B cell (primary cell): ENCODE measurements at regions of chr2 and their contacts with region 1.

Region 1: GRCh38 chr2:144332356-144333142 is 187.4 kb downstream of the ZEB2 start:
- DNase-seq: peak; percentile 94
- ATAC-seq: peak; percentile 88
- H3K4me3 ChIP-seq: peak overlapping the region; percentile 43 to 86 (median 84)
- H3K4me3 Mint-ChIP-seq: peak overlapping the region; percentile 92
- H3K27ac ChIP-seq: peak overlapping the region in 1 of 2 donors; percentile 40
- H3K27ac Mint-ChIP-seq: peak overlapping the region; percentile 92
- H3K4me1 ChIP-seq: peaks cover 6 to 11% of the 10 kb centered on the region in 2 donors
- H3K4me1 Mint-ChIP-seq: peaks cover 21% of the 10 kb centered on the region
- H3K27me3 ChIP-seq: no peaks in the 10 kb centered on the region
- H3K27me3 Mint-ChIP-seq: no peaks in the 10 kb centered on the region
- CTCF ChIP-seq: no peak

Region 2: DNA sequence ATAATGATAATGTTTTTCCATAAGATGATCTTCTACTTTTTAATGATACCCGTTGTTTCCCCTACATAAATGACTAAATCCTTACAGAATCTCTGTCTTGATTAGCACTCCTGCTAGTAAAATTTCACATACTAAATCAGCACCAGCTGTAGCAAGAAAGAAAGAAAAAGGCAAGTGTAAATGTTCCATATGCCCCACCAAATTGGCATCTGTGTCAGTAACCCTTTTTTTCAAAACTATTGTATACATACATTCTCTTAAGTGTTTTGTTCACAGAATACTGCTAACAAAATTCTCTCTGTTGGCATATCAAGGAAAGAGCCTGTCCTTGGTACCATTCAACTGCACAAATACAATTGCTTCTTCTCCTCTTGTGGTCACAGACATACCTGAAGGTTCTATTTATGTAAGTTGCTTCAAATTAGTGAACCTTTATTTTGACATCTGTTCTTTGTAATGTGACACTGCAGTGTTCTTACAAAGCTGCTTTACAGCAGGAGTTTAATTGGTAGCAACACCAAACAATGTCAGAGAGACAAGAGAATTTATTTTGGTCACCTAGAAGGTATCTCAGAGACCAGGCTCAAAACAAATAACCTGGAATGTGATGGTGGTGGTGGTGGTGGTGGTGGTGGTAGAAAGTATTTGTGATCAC is 454.5 kb before region 1 on chr2:
- CTCF ChIA-PET with region 1: no interaction called
- POLR2A ChIA-PET with region 1: no interaction called
- intact Hi-C with region 1: no loop called
- DNase-seq: no peak
- ATAC-seq: no peak
- H3K4me3 ChIP-seq: no peak overlapping the region
- H3K4me3 Mint-ChIP-seq: no peak overlapping the region
- H3K27ac ChIP-seq: no peak overlapping the region
- H3K27ac Mint-ChIP-seq: no peak overlapping the region
- H3K4me1 ChIP-seq: no peaks in the 10 kb centered on the region
- H3K4me1 Mint-ChIP-seq: no peaks in the 10 kb centered on the region
- H3K27me3 ChIP-seq: no peaks in the 10 kb centered on the region
- H3K27me3 Mint-ChIP-seq: no peaks in the 10 kb centered on the region
- CTCF ChIP-seq: no peak

Region 3: GRCh38 chr2:144183727-144184126 is 148.8 kb before region 1 on chr2:
- CTCF ChIA-PET with region 1: no interaction called
- POLR2A ChIA-PET with region 1: no interaction called
- intact Hi-C with region 1: loop called (anchors 5 kb)
- DNase-seq: peak; percentile 84
- ATAC-seq: peak; percentile 98
- H3K4me3 ChIP-seq: peak overlapping the region in 4 of 5 experiments; percentile 6 to 32 (median 22)
- H3K4me3 Mint-ChIP-seq: peak overlapping the region; percentile 86
- H3K27ac ChIP-seq: no peak overlapping the region
- H3K27ac Mint-ChIP-seq: no peak overlapping the region
- H3K4me1 ChIP-seq: peaks cover 8 to 22% of the 10 kb centered on the region in 2 donors
- H3K4me1 Mint-ChIP-seq: peaks cover 27% of the 10 kb centered on the region
- H3K27me3 ChIP-seq: no peaks in the 10 kb centered on the region
- H3K27me3 Mint-ChIP-seq: no peaks in the 10 kb centered on the region
- CTCF ChIP-seq: no peak

Region 4: GRCh38 chr2:144240587-144241339 is 91.8 kb before region 1 on chr2:
- CTCF ChIA-PET with region 1: no interaction called
- POLR2A ChIA-PET with region 1: no interaction called
- intact Hi-C with region 1: loop called (anchors 2 kb)
- DNase-seq: peak; percentile 61
- ATAC-seq: peak; percentile 82
- H3K4me3 ChIP-seq: peak overlapping the region in 3 of 5 experiments; percentile 18 to 28 (median 25)
- H3K4me3 Mint-ChIP-seq: peak overlapping the region; percentile 77
- H3K27ac ChIP-seq: peak overlapping the region; percentile 67 to 83
- H3K27ac Mint-ChIP-seq: peak overlapping the region; percentile 91
- H3K4me1 ChIP-seq: peaks cover 59 to 62% of the 10 kb centered on the region in 2 donors
- H3K4me1 Mint-ChIP-seq: peaks cover 77% of the 10 kb centered on the region
- H3K27me3 ChIP-seq: no peaks in the 10 kb centered on the region
- H3K27me3 Mint-ChIP-seq: no peaks in the 10 kb centered on the region
- CTCF ChIP-seq: no peak

Region 5: GRCh38 chr2:144364944-144365738 is 32.6 kb after region 1 on chr2:
- CTCF ChIA-PET with region 1: no interaction called
- POLR2A ChIA-PET with region 1: no interaction called
- intact Hi-C with region 1: no loop called
- DNase-seq: no peak
- ATAC-seq: no peak
- H3K4me3 ChIP-seq: no peak overlapping the region
- H3K4me3 Mint-ChIP-seq: no peak overlapping the region
- H3K27ac ChIP-seq: no peak overlapping the region
- H3K27ac Mint-ChIP-seq: no peak overlapping the region
- H3K4me1 ChIP-seq: no peaks in the 10 kb centered on the region
- H3K4me1 Mint-ChIP-seq: no peaks in the 10 kb centered on the region
- H3K27me3 ChIP-seq: no peaks in the 10 kb centered on the region
- H3K27me3 Mint-ChIP-seq: no peaks in the 10 kb centered on the region
- CTCF ChIP-seq: no peak

Region 6: GRCh38 chr2:144382849-144383248 is 50.3 kb after region 1 on chr2:
- CTCF ChIA-PET with region 1: no interaction called
- POLR2A ChIA-PET with region 1: no interaction called
- intact Hi-C with region 1: loop called (anchors 2 kb)
- DNase-seq: peak; percentile 69
- ATAC-seq: peak; percentile 96
- H3K4me3 ChIP-seq: peak overlapping the region in 1 of 5 experiments; percentile 50
- H3K4me3 Mint-ChIP-seq: peak overlapping the region; percentile 79
- H3K27ac ChIP-seq: peak overlapping the region in 1 of 2 donors; percentile 21
- H3K27ac Mint-ChIP-seq: peak overlapping the region; percentile 88
- H3K4me1 ChIP-seq: peaks cover 28 to 29% of the 10 kb centered on the region in 2 donors
- H3K4me1 Mint-ChIP-seq: peaks cover 50% of the 10 kb centered on the region
- H3K27me3 ChIP-seq: peaks cover 0 to 7% (median 0%) of the 10 kb centered on the region in 4 experiments
- H3K27me3 Mint-ChIP-seq: no peaks in the 10 kb centered on the region
- CTCF ChIP-seq: no peak

Region 7: GRCh38 chr2:144703852-144704708 is 371.5 kb after region 1 on chr2:
- CTCF ChIA-PET with region 1: no interaction called
- POLR2A ChIA-PET with region 1: no interaction called
- intact Hi-C with region 1: loop called (anchors 5 kb)
- DNase-seq: peak; percentile 72
- ATAC-seq: peak; percentile 87
- H3K4me3 ChIP-seq: peak overlapping the region in 3 of 5 experiments; percentile 12 to 23 (median 17)
- H3K4me3 Mint-ChIP-seq: peak overlapping the region; percentile 50
- H3K27ac ChIP-seq: peak overlapping the region; percentile 9 to 36
- H3K27ac Mint-ChIP-seq: peak overlapping the region; percentile 70
- H3K4me1 ChIP-seq: peaks cover 41 to 42% of the 10 kb centered on the region in 2 donors
- H3K4me1 Mint-ChIP-seq: peaks cover 46% of the 10 kb centered on the region
- H3K27me3 ChIP-seq: no peaks in the 10 kb centered on the region
- H3K27me3 Mint-ChIP-seq: no peaks in the 10 kb centered on the region
- CTCF ChIP-seq: no peak

Region 8: GRCh38 chr2:145752091-145752806 is 1419.7 kb after region 1 on chr2:
- CTCF ChIA-PET with region 1: no interaction called
- POLR2A ChIA-PET with region 1: no interaction called
- intact Hi-C with region 1: loop called (anchors 2 kb)
- DNase-seq: peak; percentile 70
- ATAC-seq: peak; percentile 52
- H3K4me3 ChIP-seq: no peak overlapping the region
- H3K4me3 Mint-ChIP-seq: peak overlapping the region; percentile 62
- H3K27ac ChIP-seq: no peak overlapping the region
- H3K27ac Mint-ChIP-seq: peak overlapping the region; percentile 84
- H3K4me1 ChIP-seq: peaks cover 39 to 45% of the 10 kb centered on the region in 2 donors
- H3K4me1 Mint-ChIP-seq: peaks cover 50% of the 10 kb centered on the region
- H3K27me3 ChIP-seq: no peaks in the 10 kb centered on the region
- H3K27me3 Mint-ChIP-seq: no peaks in the 10 kb centered on the region
- CTCF ChIP-seq: peak; percentile 80